Cardiac septum (tissue), 1 donor: ENCODE measurements at regions of chr2 and their contacts with region 1.

Region 1: DNA sequence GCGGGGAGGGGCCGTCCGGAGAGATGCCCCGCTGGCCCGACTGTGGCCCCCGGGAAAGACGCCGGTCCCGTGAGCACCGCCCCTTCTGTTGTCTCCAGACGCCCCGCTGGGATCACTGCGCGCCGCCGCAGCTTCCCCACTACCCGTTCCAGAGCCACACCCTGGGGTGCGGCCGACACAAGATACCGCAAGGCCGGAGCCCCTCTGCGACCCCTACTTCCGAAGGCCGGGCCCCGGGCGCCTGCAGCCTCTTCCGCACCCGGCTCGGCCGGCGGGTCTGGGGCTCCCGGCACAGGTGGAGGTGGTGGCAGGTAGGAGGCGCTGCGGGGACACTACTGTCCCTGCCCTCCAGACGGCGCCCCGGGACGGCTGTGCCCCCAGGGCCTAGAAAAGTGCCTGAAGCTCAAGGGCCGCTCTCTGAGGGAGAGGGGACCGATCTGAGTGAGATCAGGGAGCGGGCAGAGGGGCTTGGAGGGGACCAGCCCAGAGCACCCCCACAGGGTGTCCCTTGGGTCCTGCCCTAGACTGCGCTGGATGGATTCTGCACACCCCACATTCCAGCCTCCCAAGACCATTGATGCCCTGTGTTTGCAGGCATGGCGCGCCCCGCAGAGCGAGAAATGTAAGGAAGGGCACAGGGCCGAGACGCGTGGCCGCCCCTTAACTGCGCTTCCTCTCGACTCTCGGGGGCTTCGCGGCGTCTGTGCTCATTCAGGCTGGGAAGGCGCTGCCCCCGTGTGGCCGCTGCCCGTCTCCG is 80.0 kb downstream of the GFPT1 start:
- DNase-seq: peak; percentile 90

Region 2: GRCh38 chr2:68943581-68944568 is 363.1 kb before region 1 on chr2:
- intact Hi-C with region 1: loop called (anchors 10 kb)
- DNase-seq: no peak

Region 3: DNA sequence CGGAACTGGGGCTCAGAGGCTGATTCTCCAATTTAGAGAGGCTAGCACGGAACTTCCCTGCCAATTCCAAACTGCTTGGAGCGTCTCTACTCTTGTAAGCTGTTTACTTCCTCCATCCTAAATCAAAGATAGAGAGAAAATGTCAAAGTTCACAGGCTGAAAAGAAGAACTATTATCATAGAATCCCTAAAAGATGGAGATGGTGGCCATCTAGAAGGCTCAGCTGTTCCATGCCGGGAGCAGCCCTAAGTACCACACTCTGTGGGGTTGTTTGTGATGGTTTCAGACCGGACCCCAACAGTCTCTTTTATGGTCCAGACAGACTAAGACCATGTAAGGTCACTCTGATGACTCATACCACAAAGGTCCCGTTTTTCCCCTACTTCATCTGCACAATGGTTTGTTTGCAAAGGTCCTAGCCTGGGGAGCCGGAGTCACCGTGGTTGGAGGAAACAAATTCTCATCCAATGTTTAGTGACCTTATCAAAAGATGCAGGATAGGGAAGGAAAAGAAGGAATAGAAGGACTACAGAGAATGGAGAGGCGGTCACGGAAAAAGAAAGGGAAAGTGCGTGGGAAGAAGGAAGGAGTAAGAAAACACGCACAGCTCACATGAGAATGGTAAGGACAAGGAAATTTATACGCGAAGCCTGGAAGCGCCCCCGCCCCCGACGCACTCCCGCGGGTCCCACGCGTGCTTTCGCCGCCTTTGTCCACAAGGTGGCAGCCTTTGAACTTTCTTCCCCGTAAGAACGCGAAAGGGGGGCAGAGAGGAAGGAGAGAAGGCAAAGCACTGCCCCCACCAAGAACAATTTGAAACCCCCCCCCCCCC is 294.5 kb before region 1 on chr2:
- intact Hi-C with region 1: loop called (anchors 1 kb)
- DNase-seq: peak; percentile 83

Region 4: DNA sequence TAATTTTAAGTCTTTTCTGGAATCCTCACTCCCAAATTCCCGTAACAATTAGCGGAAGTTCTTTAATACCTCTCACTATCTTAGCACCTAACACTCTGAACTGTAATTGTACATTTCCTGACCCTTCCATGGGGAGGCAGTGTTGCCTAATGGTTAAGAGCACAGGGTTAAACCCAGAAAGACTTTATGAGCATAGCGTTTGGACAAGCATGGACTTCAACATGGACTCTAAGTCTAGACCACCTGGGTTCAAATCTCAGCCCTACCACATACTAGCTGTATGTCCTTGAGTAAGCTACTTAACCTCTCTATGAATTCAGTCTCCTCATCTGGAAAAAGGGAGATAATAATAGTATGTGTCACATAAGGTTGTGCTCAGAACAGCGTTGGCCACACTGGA is 281.0 kb before region 1 on chr2:
- intact Hi-C with region 1: loop called (anchors 2 kb)
- DNase-seq: no peak

Region 5: DNA sequence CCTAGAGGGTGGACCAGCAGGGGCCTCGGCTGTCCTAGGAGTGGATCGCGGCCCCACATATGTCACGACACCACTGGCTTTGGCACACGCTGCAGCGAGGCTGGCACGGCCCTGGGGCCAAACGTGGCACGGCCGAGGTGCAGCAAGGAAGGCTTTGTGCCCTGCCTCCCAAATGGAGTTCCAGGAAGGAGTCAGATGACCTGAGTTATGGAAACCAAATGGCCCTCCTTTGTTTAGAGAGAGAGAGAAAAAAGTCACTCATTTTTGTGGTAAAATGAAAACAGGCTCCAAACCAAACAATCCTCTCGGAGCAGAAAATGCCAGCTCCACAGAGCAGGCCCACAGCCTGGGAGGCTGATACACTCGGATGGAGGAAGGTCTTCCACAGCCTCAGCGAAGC is 188.4 kb before region 1 on chr2:
- intact Hi-C with region 1: no loop called
- DNase-seq: no peak

Region 6: DNA sequence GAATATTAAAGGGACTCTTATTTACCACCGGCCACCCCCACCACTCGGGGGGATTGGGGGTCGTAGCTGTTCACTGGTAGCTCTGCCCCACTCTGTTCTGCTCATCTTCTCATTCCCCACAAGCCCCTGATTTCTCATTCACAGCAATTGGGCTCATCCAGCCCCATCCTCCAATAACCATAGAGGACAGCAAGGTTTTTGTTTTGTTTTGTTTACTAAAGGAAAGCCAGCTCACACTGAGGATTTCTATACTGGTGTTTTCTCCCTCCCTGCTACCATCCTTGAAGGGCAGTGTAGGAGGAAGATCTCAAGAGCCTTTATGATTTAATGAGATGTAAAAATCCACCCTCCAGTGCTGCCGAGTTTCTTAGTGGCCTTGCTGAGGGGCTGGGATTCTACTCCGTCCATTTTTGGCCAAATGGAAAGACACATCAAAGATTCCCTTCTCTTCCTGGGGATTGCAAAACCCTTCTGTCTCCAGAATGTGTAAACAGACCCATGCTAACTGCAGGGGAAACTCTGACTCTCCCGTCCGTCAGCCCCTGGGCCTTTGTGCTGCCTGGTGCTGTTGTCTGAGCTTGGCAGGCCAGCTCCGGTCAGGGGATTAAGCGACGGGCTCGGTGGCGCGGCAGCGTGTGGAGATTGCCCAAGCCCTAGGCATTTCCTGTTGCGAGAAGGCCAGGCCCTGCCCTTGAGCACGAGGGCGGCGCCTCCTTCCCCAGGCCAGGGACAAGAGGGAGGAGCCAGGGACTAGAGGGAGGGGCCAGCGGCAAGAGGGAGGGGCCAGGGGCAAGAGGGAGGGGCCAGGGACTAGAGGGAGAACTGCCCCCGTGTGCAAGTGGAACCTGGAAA is 129.0 kb before region 1 on chr2:
- intact Hi-C with region 1: loop called (anchors 2 kb)
- DNase-seq: peak; percentile 96

Region 7: GRCh38 chr2:69272803-69273471 is 34.1 kb before region 1 on chr2:
- intact Hi-C with region 1: no loop called
- DNase-seq: no peak